ENCODE measurements at regions of chr4 and their contacts with region 1.

Region 1: DNA sequence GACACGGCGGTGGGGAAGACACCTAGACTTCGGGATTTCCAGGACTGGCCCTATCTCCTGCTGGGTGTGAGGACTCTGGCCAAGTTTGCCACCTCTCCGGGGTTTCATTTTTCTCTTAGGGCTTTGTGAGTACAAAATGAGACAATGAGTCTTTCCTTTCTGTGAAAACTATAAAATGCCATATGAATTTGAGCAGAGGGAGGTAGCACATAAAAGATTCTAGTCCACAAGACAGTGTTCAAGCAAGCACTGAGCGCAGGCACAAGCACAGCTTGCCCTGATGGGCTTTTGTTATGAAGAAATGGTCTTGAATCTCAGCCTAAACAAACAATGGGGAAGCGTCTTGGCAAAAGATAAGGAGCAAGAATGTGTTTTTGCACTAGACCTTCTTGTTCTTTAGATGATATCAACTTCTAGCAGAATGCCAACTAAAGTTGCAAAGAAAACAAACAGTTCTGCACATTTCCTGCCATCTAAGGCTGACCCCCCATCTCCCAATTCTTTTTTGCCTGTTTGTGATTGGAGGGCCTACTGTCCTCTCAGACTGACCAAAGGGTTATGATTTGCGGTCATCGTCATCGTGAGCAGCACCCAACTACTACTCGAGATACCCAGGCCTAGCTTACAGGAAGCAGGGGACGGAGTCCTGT is 73.0 kb upstream of the ZNF518B start:
- DNase-seq: peak; percentile 95
- H3K4me3 ChIP-seq: peak overlapping the region in 1 of 3 experiments; percentile 35
- H3K27ac ChIP-seq: peak overlapping the region; percentile 98
- H3K4me1 ChIP-seq: peaks cover 37% of the 10 kb centered on the region
- H3K27me3 ChIP-seq: no peaks in the 10 kb centered on the region
- CTCF ChIP-seq: no peak
- POLR2A ChIP-seq: peak; percentile 84

Region 2: DNA sequence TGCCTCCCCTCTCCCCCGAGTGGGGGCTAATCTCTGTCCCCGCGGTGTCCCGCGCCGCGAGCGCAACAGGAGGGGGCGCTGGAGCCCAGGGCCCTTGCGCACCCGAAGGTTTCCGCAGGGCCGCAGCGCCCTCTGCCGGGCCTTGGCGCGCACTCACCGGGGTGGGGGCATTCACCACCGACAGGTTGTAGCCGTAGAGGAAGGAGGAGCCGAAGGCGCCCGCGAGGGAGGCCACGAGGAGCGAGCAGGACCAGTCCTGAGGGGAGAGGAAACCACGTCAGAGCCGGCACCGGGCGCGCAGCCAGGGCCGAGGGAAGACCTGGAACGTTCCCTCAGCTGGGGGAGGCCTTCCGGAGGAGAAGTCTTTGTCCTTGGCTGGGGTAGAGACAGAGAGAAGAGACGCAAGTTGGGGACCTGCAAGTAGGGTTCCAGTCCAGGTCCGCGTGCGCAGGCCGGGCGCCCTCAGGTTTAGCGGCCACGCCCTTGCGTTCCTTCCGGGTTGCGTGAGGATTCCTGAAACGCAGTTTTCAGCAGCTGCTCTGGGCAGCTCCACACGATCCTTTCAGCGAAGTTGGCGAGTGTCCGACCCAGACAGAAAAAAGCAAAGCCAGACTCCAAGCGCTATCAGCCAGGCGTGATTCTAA is 511.3 kb before region 1 on chr4:
- CTCF ChIA-PET with region 1: no interaction called
- POLR2A ChIA-PET with region 1: no interaction called
- dilution Hi-C with region 1: no loop called
- intact Hi-C with region 1: loop called (anchors 5 kb)
- DNase-seq: peak; percentile 95
- H3K4me3 ChIP-seq: peak overlapping the region in 2 of 3 experiments; percentile 25 to 27
- H3K27ac ChIP-seq: peak overlapping the region; percentile 50
- H3K4me1 ChIP-seq: peaks cover 6% of the 10 kb centered on the region
- H3K27me3 ChIP-seq: no peaks in the 10 kb centered on the region
- CTCF ChIP-seq: peak; percentile 100
- POLR2A ChIP-seq: peak; percentile 75

Region 3: DNA sequence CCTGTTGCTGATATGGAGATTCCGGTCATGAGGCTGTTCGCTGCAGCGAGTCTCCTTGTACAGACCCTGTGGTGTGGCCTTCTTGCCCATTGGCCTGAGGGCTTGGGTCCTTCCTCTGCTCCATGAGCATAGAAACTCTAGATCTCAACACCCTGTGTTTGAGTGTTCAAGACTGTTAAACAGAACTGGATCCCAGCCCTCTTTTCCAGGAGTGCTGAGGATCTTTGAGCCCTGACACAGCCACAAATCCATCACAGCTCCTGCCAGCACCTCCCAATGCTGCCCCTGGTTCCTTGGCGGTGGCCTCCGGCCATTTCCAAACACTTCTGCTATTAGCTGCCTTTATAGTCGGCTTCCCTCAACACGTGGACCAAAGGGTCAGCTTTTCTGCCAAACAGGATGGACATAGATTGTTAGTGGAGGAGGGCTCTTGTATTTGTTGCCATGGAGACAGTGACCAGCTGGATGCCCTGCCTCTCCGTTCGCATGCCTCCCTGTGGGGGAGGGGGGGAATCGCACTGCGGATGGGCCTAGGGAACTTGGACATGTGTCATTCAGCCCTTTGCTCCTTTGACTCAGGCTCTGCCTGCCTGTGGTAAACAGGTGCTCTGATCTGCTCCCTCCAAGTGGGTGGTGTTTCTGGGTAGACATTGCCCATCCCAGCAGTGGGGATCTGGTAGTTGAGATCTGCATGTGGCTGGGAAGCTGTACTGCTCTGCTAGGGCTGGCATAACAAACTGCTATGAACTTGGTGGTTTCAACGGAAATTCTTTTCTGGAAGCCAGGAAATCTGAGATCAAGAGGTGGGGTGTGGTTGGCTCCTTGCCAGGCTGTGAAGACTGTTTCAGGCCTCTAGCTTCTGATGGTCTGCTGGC is 406.8 kb before region 1 on chr4:
- CTCF ChIA-PET with region 1: interaction called, 3 read pairs
- POLR2A ChIA-PET with region 1: interaction called, 3 read pairs
- dilution Hi-C with region 1: no loop called
- intact Hi-C with region 1: loop called (anchors 1 kb)
- DNase-seq: peak; percentile 94
- H3K4me3 ChIP-seq: no peak overlapping the region
- H3K27ac ChIP-seq: peak overlapping the region; percentile 66
- H3K4me1 ChIP-seq: peaks cover 22% of the 10 kb centered on the region
- H3K27me3 ChIP-seq: no peaks in the 10 kb centered on the region
- CTCF ChIP-seq: no peak
- POLR2A ChIP-seq: no peak

Region 4: DNA sequence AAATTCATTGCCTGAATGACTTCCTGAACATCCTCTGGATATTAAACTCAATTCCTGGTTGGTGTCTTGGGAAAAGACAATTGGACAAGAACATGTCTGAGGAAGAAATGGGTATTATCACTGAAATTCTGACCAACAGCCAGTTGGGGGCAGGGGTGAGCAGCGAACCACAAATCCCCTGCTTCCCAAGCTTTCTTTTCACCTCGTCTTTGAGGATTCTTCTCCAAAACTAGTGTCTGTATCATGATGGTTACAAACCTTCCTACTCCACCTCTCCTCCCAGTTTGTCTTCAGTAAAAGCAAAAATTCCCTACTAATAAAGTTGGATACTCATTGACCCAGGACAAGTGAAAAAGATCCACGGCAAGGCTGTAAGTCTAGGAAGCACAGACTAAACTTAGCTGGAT is 365.4 kb before region 1 on chr4:
- CTCF ChIA-PET with region 1: interaction called, 88 read pairs
- POLR2A ChIA-PET with region 1: no interaction called
- dilution Hi-C with region 1: loop called (anchors 25 kb)
- intact Hi-C with region 1: no loop called
- DNase-seq: peak; percentile 73
- H3K4me3 ChIP-seq: no peak overlapping the region
- H3K27ac ChIP-seq: no peak overlapping the region
- H3K4me1 ChIP-seq: no peaks in the 10 kb centered on the region
- H3K27me3 ChIP-seq: no peaks in the 10 kb centered on the region
- CTCF ChIP-seq: peak; percentile 65 to 74
- POLR2A ChIP-seq: no peak

Region 5: GRCh38 chr4:10461091-10461849 is 69.0 kb before region 1 on chr4:
- CTCF ChIA-PET with region 1: interaction called, 69 read pairs
- POLR2A ChIA-PET with region 1: no interaction called
- dilution Hi-C with region 1: no loop called
- intact Hi-C with region 1: loop called (anchors 1 kb)
- DNase-seq: peak; percentile 67
- H3K4me3 ChIP-seq: peak overlapping the region in 2 of 3 experiments; percentile 21 to 27
- H3K27ac ChIP-seq: no peak overlapping the region
- H3K4me1 ChIP-seq: peaks cover 17% of the 10 kb centered on the region
- H3K27me3 ChIP-seq: peaks cover 13 to 20% of the 10 kb centered on the region in 2 experiments
- CTCF ChIP-seq: peak; percentile 92 to 93
- POLR2A ChIP-seq: no peak